Calu3 (cell line): ENCODE measurements at regions of chr17 and their contacts with region 1.

Region 1: GRCh38 chr17:39209317-39210092 is 9.4 kb downstream of the RPL19 start:
- DNase-seq: peak; percentile 81
- H3K4me3 Mint-ChIP-seq: peak overlapping the region; percentile 55
- H3K27ac Mint-ChIP-seq: peak overlapping the region; percentile 16
- H3K4me1 Mint-ChIP-seq: peaks cover 43% of the 10 kb centered on the region
- H3K27me3 Mint-ChIP-seq: peaks cover 63% of the 10 kb centered on the region
- CTCF ChIP-seq: peak; percentile 13

Region 2: DNA sequence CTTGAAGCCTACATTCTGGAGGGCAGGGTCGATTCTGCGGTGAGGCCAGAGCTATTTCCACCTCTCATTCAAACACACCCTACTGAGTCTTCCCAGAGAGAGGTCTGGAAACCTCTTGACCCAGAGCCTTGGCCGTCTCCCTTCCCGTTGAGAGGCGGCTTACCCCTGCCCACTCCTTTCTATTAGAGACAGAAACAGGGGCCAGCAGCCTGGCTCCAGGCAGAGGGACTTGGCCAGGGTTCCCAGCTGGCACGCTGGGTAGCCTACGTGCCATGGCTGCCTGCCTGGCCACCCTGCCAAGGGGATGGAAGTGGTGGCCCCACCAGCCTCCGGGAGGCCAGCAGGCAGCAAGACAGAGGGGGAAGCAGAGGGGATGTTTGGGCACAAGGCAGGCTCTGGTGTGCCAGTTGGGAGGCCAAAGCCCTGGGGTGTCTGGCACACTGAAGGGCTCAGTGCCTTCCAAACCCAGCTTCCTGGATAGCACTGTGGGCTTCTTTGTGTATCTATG is 10.2 kb after region 1 on chr17:
- CTCF ChIA-PET with region 1: interaction called, 10 read pairs
- intact Hi-C with region 1: no loop called
- DNase-seq: no peak
- H3K4me3 Mint-ChIP-seq: no peak overlapping the region
- H3K27ac Mint-ChIP-seq: no peak overlapping the region
- H3K4me1 Mint-ChIP-seq: no peaks in the 10 kb centered on the region
- H3K27me3 Mint-ChIP-seq: peaks cover 87% of the 10 kb centered on the region
- CTCF ChIP-seq: no peak